Endothelial cell of umbilical vein (primary cell): ENCODE measurements at regions of chr6 and their contacts with region 1.

Region 1: GRCh38 chr6:8219352-8219943 is 117.1 kb upstream of the EEF1E1 start:
- DNase-seq: peak; percentile 62
- H3K4me3 ChIP-seq: no peak overlapping the region
- H3K27ac ChIP-seq: no peak overlapping the region
- H3K4me1 ChIP-seq: no peaks in the 10 kb centered on the region
- H3K27me3 ChIP-seq: peaks cover 0 to 8% of the 10 kb centered on the region in 2 experiments
- CTCF ChIP-seq: peak; percentile 57 to 62
- POLR2A ChIP-seq: no peak

Region 2: GRCh38 chr6:8069631-8070284 is 149.7 kb before region 1 on chr6:
- CTCF ChIA-PET with region 1: interaction called, 37 read pairs
- POLR2A ChIA-PET with region 1: no interaction called
- dilution Hi-C with region 1: no loop called
- intact Hi-C with region 1: loop called (anchors 1 kb)
- DNase-seq: no peak
- H3K4me3 ChIP-seq: no peak overlapping the region
- H3K27ac ChIP-seq: no peak overlapping the region
- H3K4me1 ChIP-seq: peaks cover under 1% of the 10 kb centered on the region
- H3K27me3 ChIP-seq: no peaks in the 10 kb centered on the region
- CTCF ChIP-seq: no peak
- POLR2A ChIP-seq: no peak

Region 3: GRCh38 chr6:8181951-8182845 is 37.2 kb before region 1 on chr6:
- CTCF ChIA-PET with region 1: interaction called, 10 read pairs
- POLR2A ChIA-PET with region 1: no interaction called
- dilution Hi-C with region 1: no loop called
- intact Hi-C with region 1: no loop called
- DNase-seq: no peak
- H3K4me3 ChIP-seq: no peak overlapping the region
- H3K27ac ChIP-seq: no peak overlapping the region
- H3K4me1 ChIP-seq: peaks cover 10% of the 10 kb centered on the region
- H3K27me3 ChIP-seq: no peaks in the 10 kb centered on the region
- CTCF ChIP-seq: no peak
- POLR2A ChIP-seq: no peak

Region 4: GRCh38 chr6:8207200-8208191 is 12.0 kb before region 1 on chr6:
- CTCF ChIA-PET with region 1: interaction called, 40 read pairs
- POLR2A ChIA-PET with region 1: no interaction called
- dilution Hi-C with region 1: no loop called
- intact Hi-C with region 1: no loop called
- DNase-seq: no peak
- H3K4me3 ChIP-seq: no peak overlapping the region
- H3K27ac ChIP-seq: no peak overlapping the region
- H3K4me1 ChIP-seq: no peaks in the 10 kb centered on the region
- H3K27me3 ChIP-seq: peaks cover 0 to 2% of the 10 kb centered on the region in 2 experiments
- CTCF ChIP-seq: no peak
- POLR2A ChIP-seq: no peak